ENCODE measurements at regions of chr2 and their contacts with region 1.

Region 1: GRCh38 chr2:101047075-101047766 is 45.1 kb downstream of the RPL31 start:
- DNase-seq: no peak
- H3K4me3 ChIP-seq: no peak overlapping the region
- H3K27ac ChIP-seq: no peak overlapping the region
- H3K4me1 ChIP-seq: peaks cover 0 to 26% (median 9%) of the 10 kb centered on the region in 6 donors
- H3K27me3 ChIP-seq: no peaks in the 10 kb centered on the region
- CTCF ChIP-seq: no peak
- POLR2A ChIP-seq: no peak

Region 2: DNA sequence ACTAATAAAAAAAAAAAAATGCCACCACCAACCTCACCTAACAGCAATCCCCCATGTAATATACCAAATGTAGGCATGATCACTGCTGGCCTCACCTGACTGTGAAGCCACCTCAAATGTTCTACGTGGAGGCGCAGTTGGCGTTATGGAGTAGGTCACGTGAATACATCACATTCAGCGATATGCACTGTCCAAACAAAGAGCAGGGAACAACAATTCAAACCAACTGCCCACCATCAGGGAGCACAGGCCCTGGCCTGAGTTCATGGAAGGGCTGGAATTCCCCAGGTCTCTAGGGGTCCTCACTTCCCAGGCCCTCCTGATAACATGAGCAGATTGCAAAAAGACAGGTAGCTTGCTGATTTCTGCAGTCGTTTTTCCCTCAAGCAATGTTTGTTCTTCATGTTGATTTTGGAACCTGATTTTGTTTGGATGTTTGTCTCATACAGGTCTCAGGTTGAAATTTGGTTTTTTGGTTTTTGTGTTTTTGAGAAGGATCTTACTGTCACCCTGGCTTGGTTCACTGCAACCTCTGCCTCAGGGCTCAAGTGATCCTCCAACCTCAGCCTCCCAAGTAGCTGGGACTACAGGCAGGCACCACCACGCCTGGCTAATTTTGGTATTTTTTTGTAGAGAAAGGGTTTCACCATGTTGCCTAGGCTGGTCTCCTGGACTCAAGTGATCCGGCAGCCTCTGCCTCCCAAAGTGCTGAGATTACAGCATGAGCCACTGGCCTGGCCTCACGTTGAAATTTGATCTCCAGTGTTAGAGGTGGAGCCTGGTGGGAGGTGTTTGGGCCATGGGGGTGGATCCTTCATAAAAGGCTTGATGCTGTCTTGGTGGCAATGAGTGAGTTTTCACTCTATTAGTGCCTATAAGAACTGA is 88.4 kb after region 1 on chr2:
- intact Hi-C with region 1: loop called (anchors 10 kb)
- DNase-seq: no peak
- H3K4me3 ChIP-seq: no peak overlapping the region
- H3K27ac ChIP-seq: no peak overlapping the region
- H3K4me1 ChIP-seq: peaks cover 0 to 17% (median 4%) of the 10 kb centered on the region in 6 donors
- H3K27me3 ChIP-seq: no peaks in the 10 kb centered on the region
- CTCF ChIP-seq: no peak
- POLR2A ChIP-seq: no peak